Activated T-helper 2 cell treated with anti-CD3 and anti-CD28 coated beads, Interferon-gamma antibody, Interleukin-2, Interleukin-4, amounts not matched to agents 10 μg/mL and 5 μg/mL and 100 μg/mL, durations not matched to agents 14 hours and 24 hours and 36 hours (primary cell): ENCODE measurements at regions of chr1 and their contacts with region 1.

Region 1: DNA sequence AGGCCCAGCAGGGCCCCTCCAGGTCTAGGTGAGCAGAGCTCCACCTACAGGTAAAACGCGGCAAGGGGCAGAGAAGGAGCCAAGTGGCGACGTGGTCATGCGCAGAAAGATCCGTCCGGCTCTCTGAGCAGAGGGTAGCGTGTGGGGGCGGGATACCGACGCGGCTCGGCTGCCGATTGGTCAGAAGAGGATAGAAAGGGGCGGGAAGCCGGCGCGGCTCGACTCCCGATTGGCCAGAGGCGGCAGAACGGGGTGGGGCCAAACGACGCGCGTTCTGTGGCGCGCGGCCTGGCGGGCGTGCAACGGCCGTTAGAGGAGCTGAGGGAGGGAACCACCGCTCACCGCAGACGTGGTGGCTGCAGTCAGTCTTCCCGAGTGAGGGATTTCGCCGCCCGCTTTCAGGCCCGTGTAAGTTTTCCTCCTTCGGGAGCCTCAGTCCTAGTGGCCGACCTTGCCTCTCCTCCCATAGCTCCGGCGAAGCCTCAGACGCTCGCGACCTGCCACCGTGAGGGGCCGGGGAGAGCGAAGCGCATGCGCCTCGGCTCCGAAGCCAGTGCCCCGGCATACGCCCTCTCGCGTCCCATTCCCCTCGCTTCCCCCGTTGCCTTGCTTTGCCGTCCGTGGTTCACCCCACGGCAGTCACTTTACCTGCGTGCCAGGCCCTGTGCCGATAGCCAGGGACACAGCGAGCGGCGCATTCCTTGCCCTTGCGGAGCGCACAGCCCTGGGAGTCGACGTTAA is at the start of gene CEP85:
- DNase-seq: peak; percentile 98
- H3K4me3 Mint-ChIP-seq: peak within 1 kb of the TSS; percentile 100
- H3K27ac Mint-ChIP-seq: peak within 1 kb of the TSS; percentile 92
- H3K4me1 Mint-ChIP-seq: peaks cover 38% of the 10 kb centered on the region
- H3K27me3 Mint-ChIP-seq: peaks cover 1% of the 10 kb centered on the region
- total RNA-seq, gene CEP85: 39.6 and 39.8 TPM in 2 replicates

Region 2: DNA sequence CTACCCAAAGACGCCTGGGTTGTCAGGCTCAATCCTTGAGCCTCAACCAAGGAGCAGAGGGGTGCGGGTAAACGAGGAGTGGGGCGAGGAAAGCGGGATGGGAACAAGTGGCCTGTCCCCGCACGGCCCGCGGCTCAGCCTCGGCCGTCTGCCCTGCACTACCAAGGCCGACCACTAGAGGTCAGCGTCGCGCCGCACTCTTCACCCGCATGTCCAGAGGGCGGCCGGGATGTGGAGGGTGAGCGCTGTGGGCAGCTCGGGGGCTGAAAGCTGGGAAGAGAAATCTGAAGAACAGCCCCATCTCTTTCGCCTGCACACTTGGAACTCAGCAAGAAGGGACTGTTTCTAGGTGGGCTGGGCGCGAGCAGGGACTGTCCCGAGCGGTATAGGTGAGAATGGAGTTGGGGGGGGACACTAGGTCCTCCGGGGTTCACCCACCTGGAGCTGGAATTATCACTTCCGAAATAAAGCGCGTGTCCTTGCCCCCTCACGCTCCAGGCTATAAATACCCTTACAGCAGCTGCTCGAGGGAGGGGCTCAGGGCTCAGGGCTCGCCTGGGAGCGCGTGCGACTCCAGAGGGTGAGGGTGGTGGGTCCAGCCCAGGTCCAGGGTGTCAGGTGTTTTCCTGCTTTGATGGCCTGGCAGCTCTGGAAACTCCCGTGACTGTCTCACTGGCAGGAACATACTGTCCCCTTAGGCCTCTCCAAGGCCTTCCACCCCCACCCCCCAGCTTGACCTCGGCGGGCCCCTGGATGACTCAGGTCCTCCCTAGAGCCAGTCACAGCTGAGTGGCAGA is 197.9 kb before region 1 on chr1:
- intact Hi-C with region 1: loop called (anchors 5 kb)
- DNase-seq: peak; percentile 74
- H3K4me3 Mint-ChIP-seq: peak overlapping the region; percentile 94
- H3K27ac Mint-ChIP-seq: no peak overlapping the region
- H3K4me1 Mint-ChIP-seq: peaks cover 10% of the 10 kb centered on the region
- H3K27me3 Mint-ChIP-seq: peaks cover 25% of the 10 kb centered on the region

Region 3: GRCh38 chr1:26111530-26112406 is 122.3 kb before region 1 on chr1 and contains the start of gene PDIK1L:
- intact Hi-C with region 1: loop called (anchors 1 kb)
- DNase-seq: peak; percentile 90
- H3K4me3 Mint-ChIP-seq: peak within 1 kb of the TSS; percentile 96
- H3K27ac Mint-ChIP-seq: peak within 1 kb of the TSS; percentile 92
- H3K4me1 Mint-ChIP-seq: peaks cover 29% of the 10 kb centered on the region
- H3K27me3 Mint-ChIP-seq: no peaks in the 10 kb centered on the region
- total RNA-seq, gene PDIK1L: 15.2 and 17.2 TPM in 2 replicates

Region 4: DNA sequence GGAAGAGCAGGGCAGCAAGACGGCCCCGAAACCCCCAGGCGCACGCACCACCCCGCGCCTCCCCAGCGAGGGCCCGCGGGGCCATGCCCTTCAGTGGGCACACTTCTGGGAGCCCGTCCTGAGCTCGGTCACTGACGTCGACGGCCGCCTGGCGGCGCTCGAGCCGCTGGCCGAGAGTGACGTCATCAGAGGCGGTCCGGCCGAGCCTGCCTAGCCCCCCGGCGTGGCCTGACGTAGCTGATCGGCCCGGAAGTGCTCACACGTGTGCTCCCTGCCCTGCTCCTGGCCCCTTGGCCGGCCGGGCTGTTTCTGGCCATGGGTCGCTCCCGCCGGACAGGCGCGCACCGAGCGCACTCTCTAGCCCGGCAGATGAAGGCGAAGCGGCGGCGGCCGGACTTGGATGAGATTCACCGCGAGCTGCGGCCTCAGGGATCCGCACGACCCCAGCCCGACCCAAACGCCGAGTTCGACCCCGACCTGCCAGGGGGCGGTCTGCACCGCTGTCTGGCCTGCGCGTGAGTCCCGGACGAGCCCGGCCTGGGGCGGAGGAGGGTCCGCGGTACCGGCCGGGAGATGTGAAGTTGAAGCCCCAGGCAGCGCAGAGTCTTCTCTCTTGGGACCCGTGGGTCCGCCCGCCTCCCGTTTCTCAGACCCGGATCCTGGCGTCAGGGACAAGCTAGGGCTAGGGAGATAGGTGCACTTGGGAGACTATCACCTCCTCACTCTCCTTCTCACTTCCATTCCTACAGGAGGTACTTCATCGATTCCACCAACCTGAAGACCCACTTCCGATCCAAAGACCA is 64.2 kb before region 1 on chr1 and contains the start of gene ZNF593:
- intact Hi-C with region 1: loop called (anchors 1 kb)
- DNase-seq: peak; percentile 87
- H3K4me3 Mint-ChIP-seq: peak within 1 kb of the TSS; percentile 92
- H3K27ac Mint-ChIP-seq: peak within 1 kb of the TSS; percentile 88
- H3K4me1 Mint-ChIP-seq: peaks cover 25% of the 10 kb centered on the region
- H3K27me3 Mint-ChIP-seq: peaks cover 8% of the 10 kb centered on the region
- total RNA-seq, gene ZNF593: 57.5 and 65.0 TPM in 2 replicates

Region 5: DNA sequence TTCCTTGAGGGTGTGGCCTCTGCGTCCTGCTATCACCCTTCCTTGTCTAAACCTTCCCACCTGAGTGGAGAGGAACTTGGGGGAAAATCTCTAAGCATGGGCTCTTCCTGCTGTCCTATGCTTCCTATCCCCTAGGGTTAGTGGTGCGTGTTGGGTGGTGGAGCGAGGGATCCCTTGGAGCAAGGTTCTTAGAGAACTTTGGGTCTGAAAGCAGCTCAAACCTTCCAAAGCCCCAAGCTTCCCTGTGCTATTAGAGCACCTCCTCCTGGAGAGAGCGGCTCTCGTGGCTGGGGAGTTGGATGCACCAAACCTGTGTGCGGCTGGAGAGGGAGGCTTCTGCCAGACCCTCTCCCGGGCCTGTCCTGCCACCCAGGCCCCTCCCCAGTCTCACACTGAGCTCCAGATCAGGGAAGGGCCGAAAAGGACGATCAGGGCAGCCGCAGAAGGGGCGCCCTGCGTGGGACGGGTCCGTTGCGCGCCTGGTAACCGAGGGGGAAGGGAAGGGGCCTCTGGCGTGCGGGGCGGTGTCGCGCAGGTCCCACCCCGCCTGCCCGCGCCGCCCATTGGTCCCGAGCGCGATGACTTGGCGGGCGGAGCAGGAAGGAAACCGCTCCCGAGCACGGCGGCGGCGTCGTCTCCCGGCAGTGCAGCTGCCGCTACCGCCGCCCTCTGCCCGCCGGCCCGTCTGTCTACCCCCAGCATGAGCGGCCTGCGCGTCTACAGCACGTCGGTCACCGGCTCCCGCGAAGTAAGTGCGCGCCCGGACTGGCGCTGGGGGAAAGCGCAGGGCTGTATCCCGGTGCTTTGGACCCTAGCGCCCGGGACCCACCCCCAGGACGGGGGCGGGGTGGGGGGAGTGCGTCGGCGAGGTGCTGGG is 45.6 kb after region 1 on chr1 and contains the start of gene SH3BGRL3:
- intact Hi-C with region 1: loop called (anchors 2 kb)
- DNase-seq: peak; percentile 84
- H3K4me3 Mint-ChIP-seq: peak within 1 kb of the TSS; percentile 93
- H3K27ac Mint-ChIP-seq: peak within 1 kb of the TSS; percentile 97
- H3K4me1 Mint-ChIP-seq: peaks cover 76% of the 10 kb centered on the region
- H3K27me3 Mint-ChIP-seq: no peaks in the 10 kb centered on the region
- total RNA-seq, gene SH3BGRL3: 437 TPM in 2 replicates

Region 6: GRCh38 chr1:26306290-26307229 is 72.5 kb after region 1 on chr1 and contains the start of gene UBXN11:
- intact Hi-C with region 1: loop called (anchors 5 kb)
- DNase-seq: peak; percentile 91
- H3K4me3 Mint-ChIP-seq: peak within 1 kb of the TSS; percentile 99
- H3K27ac Mint-ChIP-seq: peak within 1 kb of the TSS; percentile 93
- H3K4me1 Mint-ChIP-seq: peaks cover 25% of the 10 kb centered on the region
- H3K27me3 Mint-ChIP-seq: no peaks in the 10 kb centered on the region
- total RNA-seq, gene UBXN11: 13.1 and 14.2 TPM in 2 replicates